HepG2 (cell line): ENCODE measurements at regions of chr14 and their contacts with region 1.

Region 1: GRCh38 chr14:23320774-23321571 is at the start of gene PABPN1:
- DNase-seq: peak; percentile 100
- ATAC-seq: peak; percentile 94
- H3K4me3 ChIP-seq: peak within 1 kb of the TSS; percentile 79 to 99 (median 98)
- H3K27ac ChIP-seq: peak within 1 kb of the TSS; percentile 95
- H3K4me1 ChIP-seq: peaks cover 36% of the 10 kb centered on the region
- H3K27me3 ChIP-seq: peaks cover 0 to 6% of the 10 kb centered on the region in 2 experiments; a peak in 2 of 5 replicates
- CTCF ChIP-seq: peak; percentile 10
- EP300 ChIP-seq: peak; percentile 68 to 90; a peak in 3 of 4 replicates
- POLR2A ChIP-seq: peak in 1 of 2 experiments; percentile 91; a peak in 2 of 4 replicates
- RAD21 ChIP-seq: peak; percentile 67
- total RNA-seq, gene PABPN1: 173 and 233 TPM in 2 replicates

Region 2: DNA sequence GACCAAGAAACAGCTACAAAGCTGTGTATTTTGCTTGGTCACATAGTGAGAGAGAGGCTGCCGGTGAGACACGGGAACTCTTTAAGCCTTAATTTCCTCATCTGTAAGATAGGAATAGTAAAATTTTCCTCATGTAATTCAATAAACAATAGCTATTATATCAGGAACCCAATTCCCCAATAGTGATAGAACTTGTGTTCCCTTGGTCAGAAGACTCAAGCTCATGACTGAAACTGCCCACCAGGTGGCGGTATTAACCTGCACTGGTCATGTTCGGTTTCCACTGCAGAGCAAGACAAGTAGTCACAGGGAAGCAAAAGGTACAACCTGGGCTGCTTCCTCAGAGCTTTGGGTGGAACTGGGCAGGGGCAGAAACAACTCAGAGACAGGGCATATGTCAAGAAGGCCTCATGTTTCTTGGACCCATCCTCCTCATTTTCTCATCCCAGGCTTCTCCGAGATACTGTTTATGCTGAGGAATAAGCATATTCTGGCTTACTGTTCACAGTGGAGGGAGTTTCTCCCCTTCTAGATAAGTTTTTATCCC is 334.4 kb before region 1 on chr14:
- CTCF ChIA-PET with region 1: no interaction called
- POLR2A ChIA-PET with region 1: interaction called, 14 read pairs
- in situ Hi-C with region 1: no loop called
- intact Hi-C with region 1: no loop called
- DNase-seq: peak; percentile 93
- ATAC-seq: peak; percentile 56
- H3K4me3 ChIP-seq: no peak overlapping the region
- H3K27ac ChIP-seq: no peak overlapping the region
- H3K4me1 ChIP-seq: peaks cover 37% of the 10 kb centered on the region
- H3K27me3 ChIP-seq: no peaks in the 10 kb centered on the region; a peak in 1 of 5 replicates
- CTCF ChIP-seq: no peak
- EP300 ChIP-seq: 0 out of 4 replicates have a peak, but pooled peaks of 1 of the 2 experiments have one; percentile 14
- POLR2A ChIP-seq: no peak
- RAD21 ChIP-seq: peak; percentile 96

Region 3: DNA sequence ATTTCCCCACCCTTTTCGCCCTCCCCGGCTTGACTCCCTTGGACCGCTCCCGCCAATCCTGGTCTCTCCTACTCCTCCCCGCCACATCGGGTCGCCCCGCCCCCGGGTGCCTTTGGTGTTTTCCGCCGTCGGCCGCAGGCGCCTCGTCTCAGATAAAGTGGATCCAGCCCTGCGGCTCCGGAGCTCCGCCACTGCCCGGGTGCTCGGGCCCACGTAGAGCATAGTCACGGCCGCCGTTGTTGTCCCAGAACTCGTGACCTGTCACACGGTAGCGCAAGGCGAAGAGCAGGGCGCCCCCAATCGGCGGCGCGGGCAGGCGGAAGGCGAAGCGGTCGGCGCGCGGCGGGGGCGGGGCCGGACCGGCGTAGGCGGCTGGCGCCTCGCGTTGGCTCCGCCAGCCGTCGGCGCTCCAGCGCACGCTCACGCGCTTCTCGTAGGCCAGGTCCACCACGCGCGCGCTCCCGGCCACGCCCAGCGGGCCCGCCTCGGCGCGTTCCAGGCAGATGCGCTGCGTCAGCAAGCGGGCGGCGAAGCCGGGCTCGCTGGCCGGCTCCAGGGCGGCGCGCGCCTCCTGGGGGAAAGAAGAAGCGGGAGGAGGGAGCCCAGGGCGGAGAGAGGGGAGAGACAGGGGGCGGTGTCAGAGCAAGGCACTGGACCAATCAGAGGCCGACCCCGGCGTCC is 19.5 kb before region 1 on chr14:
- CTCF ChIA-PET with region 1: interaction called, 7 read pairs
- POLR2A ChIA-PET with region 1: interaction called, 1,053 read pairs
- in situ Hi-C with region 1: no loop called
- intact Hi-C with region 1: loop called (anchors 1 kb)
- DNase-seq: peak; percentile 100
- ATAC-seq: peak; percentile 87
- H3K4me3 ChIP-seq: peak overlapping the region; percentile 67 to 88 (median 75)
- H3K27ac ChIP-seq: peak overlapping the region; percentile 91
- H3K4me1 ChIP-seq: peaks cover 57% of the 10 kb centered on the region
- H3K27me3 ChIP-seq: no peaks in the 10 kb centered on the region; a peak in 1 of 5 replicates
- CTCF ChIP-seq: peak; percentile 92
- EP300 ChIP-seq: peak in 1 of 2 experiments; percentile 54; a peak in 2 of 4 replicates
- POLR2A ChIP-seq: no peak
- RAD21 ChIP-seq: peak; percentile 87

Region 4: DNA sequence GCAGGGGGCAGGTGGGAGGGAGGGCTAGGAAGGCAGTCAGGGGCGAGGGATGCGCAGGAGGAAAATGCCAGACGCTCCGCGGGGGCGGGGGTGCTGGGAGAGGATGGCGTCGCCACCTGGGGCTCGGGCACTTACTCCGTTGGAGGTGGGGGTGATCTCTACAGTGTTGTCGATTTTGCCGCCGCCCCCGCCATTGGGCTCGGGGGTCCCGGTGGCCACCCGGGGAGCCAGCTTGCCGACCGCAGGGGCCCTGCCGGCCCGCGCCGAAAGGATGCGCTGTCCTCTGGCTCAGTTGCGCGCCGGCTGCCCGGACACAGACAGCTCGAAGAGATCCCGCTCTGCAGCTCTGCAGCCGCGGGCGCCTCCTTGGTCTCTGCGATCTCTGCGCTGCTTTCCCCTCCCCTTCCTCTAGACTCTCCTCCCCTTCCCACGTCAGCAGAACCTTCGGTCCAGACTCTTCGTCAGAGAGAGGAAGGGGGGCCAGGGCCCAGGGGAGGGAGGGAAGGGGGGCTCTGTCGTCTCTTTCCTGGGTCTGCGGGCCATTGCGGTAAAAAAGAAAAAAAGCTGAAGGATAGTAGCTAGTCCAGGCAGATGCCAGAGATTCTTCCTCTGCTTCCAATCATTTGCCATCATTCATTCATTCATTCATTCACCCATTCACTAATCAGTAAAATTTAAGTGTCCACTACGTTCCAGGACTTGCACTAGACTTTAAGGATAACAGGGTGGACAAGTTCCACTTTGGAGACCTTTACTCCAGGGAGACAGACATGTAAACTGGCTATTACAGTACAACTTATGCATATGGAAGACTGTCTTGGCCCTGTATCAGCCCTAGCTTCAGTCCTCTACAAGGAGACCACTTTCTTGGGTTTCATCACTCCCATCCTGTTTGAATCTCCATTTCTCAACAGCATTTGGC is 31.8 kb after region 1 on chr14 and contains the start of gene SLC22A17:
- CTCF ChIA-PET with region 1: no interaction called
- POLR2A ChIA-PET with region 1: interaction called, 15 read pairs
- in situ Hi-C with region 1: no loop called
- intact Hi-C with region 1: no loop called
- DNase-seq: peak; percentile 45
- ATAC-seq: peak; percentile 80
- H3K4me3 ChIP-seq: peak within 1 kb of the TSS; percentile 22 to 64 (median 30); a peak in 4 of 6 replicates
- H3K27ac ChIP-seq: no peak within 1 kb of the TSS
- H3K4me1 ChIP-seq: no peaks in the 10 kb centered on the region
- H3K27me3 ChIP-seq: peaks cover 29 to 91% of the 10 kb centered on the region in 2 experiments
- CTCF ChIP-seq: peak; percentile 6
- EP300 ChIP-seq: no peak
- POLR2A ChIP-seq: no peak
- RAD21 ChIP-seq: no peak
- total RNA-seq, gene SLC22A17: 0.48 and 0.95 TPM in 2 replicates

Region 5: DNA sequence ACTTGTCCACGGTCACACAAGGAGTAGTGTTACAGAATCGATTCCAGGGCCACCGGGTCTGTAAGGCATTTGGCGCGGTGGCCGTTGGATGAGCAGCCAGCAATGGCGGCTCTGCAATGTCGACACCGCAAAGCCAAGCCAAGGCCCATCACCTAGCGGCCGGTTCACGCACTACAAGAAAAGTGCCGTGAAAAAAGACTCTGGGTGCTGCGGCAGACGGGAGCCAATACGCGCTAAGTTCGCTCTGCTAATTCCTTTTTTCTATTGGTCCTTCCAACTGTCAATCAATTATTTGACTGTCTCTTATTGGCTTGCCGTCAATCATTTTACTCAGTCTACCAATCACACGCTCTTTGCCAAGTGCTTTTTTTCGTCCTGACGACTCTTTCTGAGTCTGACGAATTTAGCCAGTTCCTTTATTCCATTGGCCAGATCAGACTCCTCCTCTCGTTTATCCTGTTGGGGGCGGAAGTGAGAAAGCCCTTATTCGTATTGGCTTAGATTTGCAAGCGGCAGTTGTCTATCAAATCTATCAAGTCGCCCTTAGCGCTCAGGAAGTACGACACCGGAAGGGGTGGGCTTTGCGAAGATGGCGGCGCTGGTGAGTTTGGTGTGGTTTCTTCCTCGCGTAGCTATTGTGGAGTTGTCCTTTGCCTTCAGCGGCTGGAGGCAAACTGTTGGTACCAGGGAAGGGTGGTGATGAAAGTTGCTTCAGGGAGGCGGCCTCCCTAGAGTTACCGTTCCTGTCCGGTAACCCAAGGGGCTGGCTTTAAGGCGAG is 148.3 kb after region 1 on chr14 and contains the start of gene NGDN:
- CTCF ChIA-PET with region 1: no interaction called
- POLR2A ChIA-PET with region 1: interaction called, 15 read pairs
- in situ Hi-C with region 1: no loop called
- intact Hi-C with region 1: loop called (anchors 1 kb)
- DNase-seq: peak; percentile 100
- ATAC-seq: peak; percentile 98
- H3K4me3 ChIP-seq: peak within 1 kb of the TSS; percentile 90 to 94 (median 93)
- H3K27ac ChIP-seq: peak within 1 kb of the TSS; percentile 70
- H3K4me1 ChIP-seq: peaks cover 14% of the 10 kb centered on the region
- H3K27me3 ChIP-seq: peaks cover 0 to 4% of the 10 kb centered on the region in 2 experiments; a peak in 1 of 5 replicates
- CTCF ChIP-seq: peak; percentile 62
- EP300 ChIP-seq: peak in 1 of 2 experiments; percentile 21; a peak in 2 of 4 replicates
- POLR2A ChIP-seq: peak; percentile 96 to 97
- RAD21 ChIP-seq: peak; percentile 72
- total RNA-seq, gene NGDN: 216 and 241 TPM in 2 replicates

Region 6: DNA sequence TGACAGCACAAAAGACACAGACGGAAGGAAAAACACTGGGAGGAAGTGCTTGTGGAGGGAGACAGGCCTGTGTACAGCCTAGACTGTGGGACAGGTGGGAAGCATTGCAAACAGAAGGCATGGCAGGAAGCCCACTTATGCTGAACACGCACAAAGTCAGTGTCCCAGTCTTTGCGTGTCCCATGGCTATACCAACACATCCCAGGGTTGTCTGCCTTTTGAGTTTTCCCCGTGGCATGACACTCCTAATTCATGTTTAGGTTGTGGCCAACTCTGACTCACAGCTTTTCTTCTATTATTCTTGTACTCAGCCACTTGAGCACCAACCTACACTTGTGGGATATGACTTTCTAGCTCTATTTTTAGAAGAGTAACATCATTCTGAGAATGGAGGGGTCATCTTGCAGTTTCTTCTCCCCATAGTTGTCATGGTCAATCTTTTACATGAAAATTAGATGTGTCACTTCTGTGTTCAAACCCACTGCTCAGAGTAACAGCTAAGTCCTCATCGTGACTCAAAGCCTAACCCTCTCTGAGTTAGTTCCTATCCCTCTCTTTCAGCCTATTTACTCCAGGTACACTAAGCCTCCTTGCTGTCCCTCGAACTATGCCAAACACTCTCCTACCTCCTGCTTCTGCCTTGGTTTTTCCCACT is 285.1 kb after region 1 on chr14:
- CTCF ChIA-PET with region 1: no interaction called
- POLR2A ChIA-PET with region 1: interaction called, 22 read pairs
- in situ Hi-C with region 1: no loop called
- intact Hi-C with region 1: no loop called
- DNase-seq: no peak
- ATAC-seq: no peak
- H3K4me3 ChIP-seq: no peak overlapping the region
- H3K27ac ChIP-seq: no peak overlapping the region
- H3K4me1 ChIP-seq: peaks cover 88% of the 10 kb centered on the region
- H3K27me3 ChIP-seq: no peaks in the 10 kb centered on the region
- CTCF ChIP-seq: no peak
- EP300 ChIP-seq: no peak
- POLR2A ChIP-seq: 0 out of 4 replicates have a peak, but pooled peaks of 1 of the 2 experiments have one; percentile 7
- RAD21 ChIP-seq: no peak